Psoas muscle (tissue), 8 donors: ENCODE measurements at regions of chr6 and their contacts with region 1.

Region 1: GRCh38 chr6:165850434-165851019 is 187.5 kb upstream of the PDE10A start:
- DNase-seq: peak; percentile 64 to 79
- ATAC-seq: peak; percentile 62 to 80 (median 67)
- H3K4me3 ChIP-seq: peak overlapping the region; percentile 28
- H3K27ac ChIP-seq: no peak overlapping the region
- H3K4me1 ChIP-seq: no peaks in the 10 kb centered on the region
- H3K27me3 ChIP-seq: peaks cover 0 to 32% (median 15%) of the 10 kb centered on the region in 3 donors
- CTCF ChIP-seq: peak; percentile 95

Region 2: GRCh38 chr6:165729307-165729936 is 121.1 kb before region 1 on chr6:
- intact Hi-C with region 1: loop called in 1 of 2 experiments (anchors 5 kb)
- DNase-seq: no peak
- ATAC-seq: no peak
- H3K4me3 ChIP-seq: no peak overlapping the region
- H3K27ac ChIP-seq: no peak overlapping the region
- H3K4me1 ChIP-seq: no peaks in the 10 kb centered on the region
- H3K27me3 ChIP-seq: no peaks in the 10 kb centered on the region
- CTCF ChIP-seq: peak; percentile 60

Region 3: DNA sequence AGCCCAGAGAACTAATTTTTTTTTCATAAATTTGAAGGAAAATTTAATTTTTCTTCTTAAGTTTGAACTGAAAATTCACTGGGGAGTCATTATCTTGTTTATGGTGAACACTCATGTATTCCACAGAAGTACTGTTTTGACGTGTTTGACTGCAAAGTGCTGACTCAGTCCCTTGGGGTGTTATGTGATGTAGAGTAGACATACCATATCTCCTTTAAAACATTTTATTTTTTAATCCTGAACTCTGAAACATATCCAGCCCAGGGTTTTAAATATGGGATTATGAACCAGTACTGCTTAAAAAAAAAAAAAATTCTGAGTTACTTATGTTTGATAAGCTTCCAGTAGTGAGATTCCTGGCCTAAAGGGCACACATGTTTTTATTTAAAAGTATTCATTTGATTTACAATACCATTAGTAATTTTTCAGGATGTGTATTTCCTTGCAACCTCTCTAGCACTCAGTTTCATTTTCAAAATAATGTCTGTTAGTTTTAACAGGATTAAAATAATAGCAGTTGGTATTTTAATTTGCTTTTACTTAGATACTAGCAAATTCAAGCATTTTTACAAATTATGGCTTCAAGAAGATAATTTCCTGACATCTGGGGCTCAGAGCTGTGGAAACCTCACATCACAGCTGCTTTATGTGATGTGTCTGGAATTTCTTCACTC is 105.8 kb before region 1 on chr6:
- intact Hi-C with region 1: no loop called
- DNase-seq: no peak
- ATAC-seq: no peak
- H3K4me3 ChIP-seq: no peak overlapping the region
- H3K27ac ChIP-seq: no peak overlapping the region
- H3K4me1 ChIP-seq: no peaks in the 10 kb centered on the region
- H3K27me3 ChIP-seq: no peaks in the 10 kb centered on the region
- CTCF ChIP-seq: no peak

Region 4: GRCh38 chr6:165755583-165755982 is 94.9 kb before region 1 on chr6:
- intact Hi-C with region 1: no loop called
- DNase-seq: no peak
- ATAC-seq: no peak
- H3K4me3 ChIP-seq: no peak overlapping the region
- H3K27ac ChIP-seq: no peak overlapping the region
- H3K4me1 ChIP-seq: no peaks in the 10 kb centered on the region
- H3K27me3 ChIP-seq: no peaks in the 10 kb centered on the region
- CTCF ChIP-seq: no peak